WTC11 (cell line): ENCODE measurements at regions of chr11 and their contacts with region 1.

Region 1: GRCh38 chr11:32809313-32809712 is 14.9 kb upstream of the CCDC73 start:
- DNase-seq: peak; percentile 80
- ATAC-seq: peak; percentile 100
- H3K4me3 Mint-ChIP-seq: no peak overlapping the region
- H3K27ac Mint-ChIP-seq: no peak overlapping the region
- H3K4me1 Mint-ChIP-seq: peaks cover 4% of the 10 kb centered on the region; the same call in 1 of the 2 replicates
- H3K27me3 Mint-ChIP-seq: no peaks in the 10 kb centered on the region
- CTCF ChIP-seq: peak; percentile 64

Region 2: GRCh38 chr11:32884770-32885384 is 75.6 kb after region 1 on chr11:
- CTCF ChIA-PET with region 1: no interaction called
- POLR2A ChIA-PET with region 1: no interaction called
- DNase-seq: no peak
- ATAC-seq: peak; percentile 78
- H3K4me3 Mint-ChIP-seq: no peak overlapping the region
- H3K27ac Mint-ChIP-seq: 0 out of 2 replicates have a peak overlapping the region, but pooled peaks have one; percentile 56
- H3K4me1 Mint-ChIP-seq: peaks cover 25% of the 10 kb centered on the region
- H3K27me3 Mint-ChIP-seq: no peaks in the 10 kb centered on the region
- CTCF ChIP-seq: peak; percentile 13; the same call in 1 of the 2 replicates

Region 3: DNA sequence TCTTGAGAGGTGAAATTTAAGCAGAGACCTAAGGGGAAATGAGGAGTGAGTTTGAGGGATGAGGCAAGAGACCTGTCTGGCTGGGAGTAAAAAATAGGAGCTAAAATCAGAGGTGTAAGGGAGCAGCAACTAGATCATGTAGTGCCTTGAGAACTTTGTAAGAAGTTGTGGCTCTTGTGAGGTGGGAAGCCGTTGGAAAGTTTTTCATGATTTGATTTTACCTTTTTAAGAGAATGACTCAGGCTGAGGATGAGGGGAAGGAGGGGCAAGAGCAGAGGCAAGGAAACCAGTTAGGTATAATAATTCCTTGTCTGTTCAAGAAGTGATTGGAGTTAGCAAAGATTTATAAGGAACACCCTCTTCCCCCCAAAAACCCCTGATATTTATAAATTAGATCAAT is 109.1 kb after region 1 on chr11:
- CTCF ChIA-PET with region 1: no interaction called
- POLR2A ChIA-PET with region 1: interaction called, 10 read pairs
- DNase-seq: no peak
- ATAC-seq: no peak
- H3K4me3 Mint-ChIP-seq: no peak overlapping the region
- H3K27ac Mint-ChIP-seq: peak overlapping the region; percentile 51
- H3K4me1 Mint-ChIP-seq: peaks cover 30% of the 10 kb centered on the region
- H3K27me3 Mint-ChIP-seq: no peaks in the 10 kb centered on the region
- CTCF ChIP-seq: no peak